ENCODE measurements at regions of chr16 and their contacts with region 1.

Region 1: GRCh38 chr16:30429678-30430427 is at the start of gene DCTPP1:
- DNase-seq: peak; percentile 97
- H3K4me3 Mint-ChIP-seq: no peak within 1 kb of the TSS
- H3K27ac Mint-ChIP-seq: no peak within 1 kb of the TSS
- H3K4me1 Mint-ChIP-seq: peaks cover 35% of the 10 kb centered on the region
- H3K27me3 Mint-ChIP-seq: no peaks in the 10 kb centered on the region
- total RNA-seq, gene DCTPP1: 87.5 to 96.6 TPM

Region 2: DNA sequence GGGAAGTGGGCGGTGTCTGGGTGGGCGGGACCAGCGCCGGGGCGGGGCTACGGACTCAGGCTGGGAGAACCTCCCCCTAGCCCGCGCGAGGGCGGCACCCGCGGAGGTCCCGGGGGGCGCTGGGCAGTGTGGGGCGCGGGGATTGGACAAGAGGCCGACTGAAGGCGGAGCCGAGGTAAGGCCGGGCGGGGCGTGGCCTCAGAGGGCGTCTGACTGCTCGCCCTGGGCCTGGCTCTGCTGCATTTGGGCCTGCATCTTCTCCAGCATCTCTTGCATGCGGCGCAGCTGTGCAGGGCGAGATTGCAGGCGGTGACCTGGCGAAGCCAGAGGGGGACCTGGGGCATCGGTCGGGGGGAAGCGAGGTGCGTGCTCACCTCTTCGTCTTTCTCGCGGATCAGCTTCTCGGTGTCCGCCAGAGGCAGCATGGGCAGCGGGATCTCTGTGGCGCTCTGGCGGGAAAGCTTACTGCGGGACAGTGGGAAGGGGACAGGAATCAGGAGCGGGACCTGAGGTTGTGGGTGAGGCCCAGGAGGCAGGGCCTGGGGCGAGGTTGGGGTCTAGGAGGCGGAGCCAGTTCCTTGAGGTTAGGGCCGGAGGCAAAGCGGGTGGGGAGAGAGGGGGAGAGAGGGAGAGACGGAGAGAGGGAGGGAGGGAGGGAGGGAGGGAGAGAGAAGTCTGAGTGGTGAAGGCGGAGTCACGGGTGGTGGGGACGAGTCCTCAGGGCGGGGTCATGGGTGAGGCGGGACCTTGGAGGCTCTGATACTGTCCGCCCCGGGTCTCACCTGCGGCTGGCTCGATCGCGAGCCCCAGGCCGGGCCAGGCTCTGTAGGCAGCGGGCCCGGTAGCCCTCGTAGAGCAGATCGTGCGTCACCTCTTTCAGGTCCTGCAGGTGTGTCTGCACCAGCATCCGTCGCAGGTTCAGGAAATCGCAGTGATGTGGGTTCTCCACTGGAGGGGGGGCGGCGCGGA is 51.3 kb before region 1 on chr16:
- CTCF ChIA-PET with region 1: interaction called, 12 read pairs
- POLR2A ChIA-PET with region 1: interaction called, 3 read pairs
- intact Hi-C with region 1: no loop called
- DNase-seq: peak; percentile 100
- H3K4me3 Mint-ChIP-seq: peak overlapping the region; percentile 99
- H3K27ac Mint-ChIP-seq: peak overlapping the region; percentile 96
- H3K4me1 Mint-ChIP-seq: peaks cover 44% of the 10 kb centered on the region
- H3K27me3 Mint-ChIP-seq: no peaks in the 10 kb centered on the region

Region 3: DNA sequence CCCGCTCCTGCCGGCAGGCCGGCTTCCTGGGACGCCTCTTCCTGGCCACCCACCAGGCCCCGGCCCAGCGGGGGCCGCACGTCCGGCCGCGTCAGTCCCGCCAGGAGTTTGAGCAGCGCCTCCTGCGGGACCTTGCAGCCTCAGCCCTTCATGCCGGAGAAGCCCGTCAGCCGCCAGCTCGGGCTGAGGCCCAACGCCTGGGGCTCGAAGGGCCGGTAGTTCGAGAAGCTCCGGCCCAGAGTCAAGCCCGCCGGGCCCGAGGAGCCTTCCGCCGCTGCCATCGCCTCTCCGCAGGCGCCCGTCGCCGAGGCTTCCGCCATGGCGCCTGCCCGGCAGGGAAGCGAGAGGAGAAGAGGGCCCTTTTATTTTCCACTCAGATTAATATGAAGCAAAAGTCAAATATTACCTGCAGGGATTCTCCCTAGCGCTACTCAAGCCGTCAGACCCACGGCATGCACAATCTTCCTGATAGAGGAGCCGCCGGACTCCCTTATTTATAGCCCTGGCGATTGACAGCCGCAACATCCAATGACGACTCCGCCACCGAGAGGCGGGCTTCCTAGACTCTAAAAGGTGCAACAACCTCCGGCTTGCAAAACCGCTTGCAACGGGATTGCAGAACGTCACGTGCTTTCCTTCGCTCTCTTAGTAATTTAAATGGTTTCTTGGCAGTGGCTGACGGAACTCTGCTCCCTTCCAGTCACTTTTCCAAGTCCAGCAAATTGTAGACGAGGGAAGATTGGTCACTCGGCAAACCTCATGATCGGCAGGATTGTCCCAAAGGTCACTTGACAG is 15.8 kb after region 1 on chr16 and contains the start of gene SEPHS2:
- CTCF ChIA-PET with region 1: interaction called, 52 read pairs
- POLR2A ChIA-PET with region 1: interaction called, 7 read pairs
- intact Hi-C with region 1: loop called (anchors 1 kb)
- DNase-seq: peak; percentile 98
- H3K4me3 Mint-ChIP-seq: peak within 1 kb of the TSS; percentile 90
- H3K27ac Mint-ChIP-seq: peak within 1 kb of the TSS; percentile 91
- H3K4me1 Mint-ChIP-seq: peaks cover 37% of the 10 kb centered on the region
- H3K27me3 Mint-ChIP-seq: no peaks in the 10 kb centered on the region
- total RNA-seq, gene SEPHS2: 61.4 to 61.7 TPM

Region 4: DNA sequence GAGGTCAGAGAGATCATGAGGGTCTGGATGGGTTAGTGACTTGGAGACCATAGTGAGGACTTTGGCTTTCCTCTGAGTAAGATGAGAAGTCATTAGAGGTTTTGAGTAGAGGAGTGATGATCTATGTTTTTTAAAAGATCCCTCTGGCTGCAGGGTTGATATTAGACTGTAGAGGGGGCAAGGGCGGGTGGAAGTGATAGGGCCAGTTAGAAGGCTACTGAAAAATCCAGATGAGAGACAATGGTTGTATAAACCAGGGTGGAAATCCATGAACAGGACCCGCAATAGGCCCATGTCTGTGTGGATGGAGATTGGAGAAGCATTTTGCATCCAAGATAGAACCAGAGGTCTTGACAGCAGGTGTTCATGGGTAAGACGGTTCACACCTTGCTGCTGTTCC is 52.5 kb after region 1 on chr16:
- CTCF ChIA-PET with region 1: interaction called, 27 read pairs
- POLR2A ChIA-PET with region 1: interaction called, 3 read pairs
- intact Hi-C with region 1: no loop called
- DNase-seq: peak; percentile 16
- H3K4me3 Mint-ChIP-seq: no peak overlapping the region
- H3K27ac Mint-ChIP-seq: peak overlapping the region; percentile 38
- H3K4me1 Mint-ChIP-seq: peaks cover 50% of the 10 kb centered on the region
- H3K27me3 Mint-ChIP-seq: no peaks in the 10 kb centered on the region

Region 5: GRCh38 chr16:30557957-30558788 is 128.3 kb after region 1 on chr16 and contains the start of gene ZNF764:
- CTCF ChIA-PET with region 1: interaction called, 14 read pairs
- POLR2A ChIA-PET with region 1: interaction called, 5 read pairs
- intact Hi-C with region 1: loop called (anchors 5 kb)
- DNase-seq: peak; percentile 99
- H3K4me3 Mint-ChIP-seq: peak within 1 kb of the TSS; percentile 89
- H3K27ac Mint-ChIP-seq: peak within 1 kb of the TSS; percentile 96
- H3K4me1 Mint-ChIP-seq: peaks cover 38% of the 10 kb centered on the region
- H3K27me3 Mint-ChIP-seq: no peaks in the 10 kb centered on the region
- total RNA-seq, gene ZNF764: 13.7 to 14.2 TPM

Region 6: DNA sequence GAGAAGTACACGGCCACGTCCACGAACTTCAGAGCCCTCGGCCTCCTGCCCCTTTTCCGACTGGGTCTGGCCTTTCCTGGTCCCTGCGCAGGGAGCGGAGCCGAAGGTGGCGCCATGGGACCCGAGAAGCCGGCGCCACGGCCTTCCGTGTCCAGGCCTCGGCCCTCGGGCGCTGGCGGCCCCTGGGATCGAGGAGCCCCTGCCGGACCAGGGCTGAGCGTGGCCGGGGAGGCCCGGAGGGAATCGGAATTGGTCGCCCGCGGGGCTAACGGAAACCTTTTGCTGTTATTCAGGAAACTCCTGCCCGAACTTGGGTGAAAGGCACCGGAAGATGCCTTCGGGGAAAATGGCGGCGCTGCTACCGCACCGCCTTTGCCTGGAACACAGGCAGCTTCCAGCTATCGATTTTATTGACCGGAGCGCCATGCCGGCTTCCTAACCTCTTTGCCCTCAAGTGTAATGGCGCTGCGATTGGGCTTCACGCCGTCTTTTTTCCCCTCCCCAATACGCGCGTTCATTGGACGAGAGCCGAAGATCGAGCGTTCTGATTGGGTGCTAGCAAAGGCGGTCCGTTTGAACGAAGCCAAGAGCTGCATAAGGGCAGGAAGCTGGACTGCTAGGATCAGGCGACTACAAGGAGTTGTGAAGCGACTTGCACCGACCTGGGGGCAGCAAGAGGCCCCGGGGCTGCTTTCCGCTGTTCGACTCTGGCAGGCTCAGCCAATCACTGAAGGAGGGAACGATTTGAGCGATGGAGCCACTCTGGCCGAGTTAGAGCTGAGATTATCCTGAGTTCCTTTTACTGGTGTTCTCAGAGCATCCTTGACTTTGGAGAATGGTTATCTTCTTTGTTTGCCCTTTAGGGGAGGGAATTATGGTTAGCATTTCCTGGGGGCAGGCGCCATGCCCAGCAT is 180.3 kb after region 1 on chr16 and contains the start of gene ZNF689:
- CTCF ChIA-PET with region 1: interaction called, 13 read pairs
- POLR2A ChIA-PET with region 1: interaction called, 9 read pairs
- intact Hi-C with region 1: loop called (anchors 5 kb)
- DNase-seq: peak; percentile 98
- H3K4me3 Mint-ChIP-seq: peak within 1 kb of the TSS; percentile 89
- H3K27ac Mint-ChIP-seq: peak within 1 kb of the TSS; percentile 94
- H3K4me1 Mint-ChIP-seq: peaks cover 15% of the 10 kb centered on the region
- H3K27me3 Mint-ChIP-seq: no peaks in the 10 kb centered on the region
- total RNA-seq, gene ZNF689: 8.7 to 9.9 TPM

Region 7: DNA sequence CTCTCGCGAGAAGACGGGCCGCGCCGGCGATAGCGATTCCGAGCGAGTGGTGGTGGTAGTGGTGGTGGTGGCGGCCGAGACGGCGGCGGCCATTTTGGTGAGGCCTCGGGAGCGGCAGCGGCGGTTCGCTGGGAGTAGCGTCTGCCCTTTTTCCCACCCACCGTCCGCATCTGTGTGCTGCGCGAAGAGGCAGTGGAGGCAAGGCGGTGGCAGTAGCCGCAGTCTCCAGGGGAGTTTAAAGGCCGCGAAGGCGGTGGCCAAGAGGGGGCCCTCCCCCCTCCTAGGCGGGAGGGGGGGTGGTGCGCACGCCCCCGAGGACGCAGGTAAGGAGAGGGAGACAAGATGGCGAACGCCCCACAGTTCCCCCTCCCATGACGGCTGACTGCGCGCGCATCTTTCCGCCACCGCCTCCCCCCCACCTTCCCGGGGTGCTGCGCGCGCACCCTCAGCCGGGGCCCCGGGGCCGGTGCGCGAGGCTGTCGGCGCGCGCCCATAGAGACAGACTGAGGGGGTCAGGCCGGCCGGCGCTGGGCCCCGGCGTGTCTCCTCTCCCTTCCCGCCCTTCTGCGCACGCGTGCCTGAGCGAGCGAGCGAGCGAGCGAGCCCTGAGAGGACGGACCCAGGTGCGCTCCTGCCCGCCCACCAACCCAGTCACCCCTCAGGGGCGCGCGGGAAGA is 268.4 kb after region 1 on chr16:
- CTCF ChIA-PET with region 1: interaction called, 4 read pairs
- POLR2A ChIA-PET with region 1: no interaction called
- intact Hi-C with region 1: loop called (anchors 5 kb)
- DNase-seq: peak; percentile 99
- H3K4me3 Mint-ChIP-seq: peak overlapping the region; percentile 96
- H3K27ac Mint-ChIP-seq: peak overlapping the region; percentile 99
- H3K4me1 Mint-ChIP-seq: peaks cover 29% of the 10 kb centered on the region
- H3K27me3 Mint-ChIP-seq: no peaks in the 10 kb centered on the region